ENCODE measurements at regions of chr7 and their contacts with region 1.

Region 1: GRCh38 chr7:129376076-129376777 is 58.0 kb upstream of the STRIP2 start:
- DNase-seq: peak; percentile 85
- H3K4me3 ChIP-seq: no peak overlapping the region
- H3K27ac ChIP-seq: no peak overlapping the region
- H3K4me1 ChIP-seq: no peaks in the 10 kb centered on the region
- H3K27me3 ChIP-seq: no peaks in the 10 kb centered on the region
- CTCF ChIP-seq: peak; percentile 42

Region 2: GRCh38 chr7:129066290-129067131 is 309.7 kb before region 1 on chr7:
- intact Hi-C with region 1: no loop called
- DNase-seq: no peak
- H3K4me3 ChIP-seq: no peak overlapping the region
- H3K27ac ChIP-seq: no peak overlapping the region
- H3K4me1 ChIP-seq: no peaks in the 10 kb centered on the region
- H3K27me3 ChIP-seq: no peaks in the 10 kb centered on the region
- CTCF ChIP-seq: no peak

Region 3: GRCh38 chr7:129343099-129343700 is 33.0 kb before region 1 on chr7:
- intact Hi-C with region 1: loop called (anchors 5 kb)
- DNase-seq: peak; percentile 55
- H3K4me3 ChIP-seq: no peak overlapping the region
- H3K27ac ChIP-seq: no peak overlapping the region
- H3K4me1 ChIP-seq: no peaks in the 10 kb centered on the region
- H3K27me3 ChIP-seq: no peaks in the 10 kb centered on the region
- CTCF ChIP-seq: peak; percentile 55

Measured in colonic mucosa (tissue), 4 donors.